Activated B cell treated with CpG ODN at 0.5 μM for 24 hours (primary cell): ENCODE measurements at regions of chr12 and their contacts with region 1.

Region 1: GRCh38 chr12:6554168-6555017 is 1.4 kb downstream of the IFFO1 start:
- DNase-seq: peak; percentile 61
- ATAC-seq: peak; percentile 77
- H3K4me3 Mint-ChIP-seq: peak overlapping the region; percentile 84
- H3K27ac Mint-ChIP-seq: peak overlapping the region; percentile 70
- H3K4me1 Mint-ChIP-seq: peaks cover 45% of the 10 kb centered on the region
- H3K27me3 Mint-ChIP-seq: no peaks in the 10 kb centered on the region
- CTCF ChIP-seq: peak; percentile 43

Region 2: DNA sequence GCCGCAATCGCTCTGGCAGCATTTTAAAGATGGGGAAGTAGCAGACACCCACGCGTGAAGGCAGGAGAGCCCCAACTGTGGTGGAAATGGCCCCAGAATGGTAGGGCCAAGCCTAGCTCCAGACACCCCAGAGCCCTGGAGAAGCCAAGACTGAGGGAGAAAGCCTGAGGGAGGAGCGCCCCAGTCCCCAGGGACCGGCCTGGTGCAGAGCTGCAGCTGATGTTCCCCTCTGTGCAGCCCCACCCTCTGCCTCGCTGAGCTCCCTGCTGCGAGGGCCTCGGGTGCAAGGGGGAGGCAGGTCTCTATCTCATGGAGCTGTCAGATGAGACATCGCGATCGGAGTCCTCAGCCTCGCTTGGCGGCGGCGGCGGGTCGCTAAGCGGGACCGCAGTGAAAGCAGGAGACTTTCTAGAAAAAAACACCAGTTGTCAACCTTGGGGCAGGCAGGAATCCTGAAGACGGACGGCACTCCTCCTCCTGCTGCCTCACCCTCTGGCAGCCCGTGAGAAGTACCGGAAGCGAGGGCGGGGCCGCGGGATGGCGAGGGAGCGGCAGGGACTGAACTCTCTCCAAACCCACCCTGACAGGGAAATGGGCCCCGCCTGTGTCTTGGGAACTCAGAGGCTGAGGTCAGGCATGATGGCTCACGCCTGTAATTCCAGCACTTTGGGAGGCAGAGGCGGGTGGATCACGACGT is 14.1 kb before region 1 on chr12:
- CTCF ChIA-PET with region 1: interaction called, 24 read pairs
- POLR2A ChIA-PET with region 1: interaction called, 10 read pairs
- intact Hi-C with region 1: loop called (anchors 1 kb)
- DNase-seq: no peak
- ATAC-seq: peak; percentile 45
- H3K4me3 Mint-ChIP-seq: peak overlapping the region; percentile 77
- H3K27ac Mint-ChIP-seq: peak overlapping the region; percentile 74
- H3K4me1 Mint-ChIP-seq: peaks cover 46% of the 10 kb centered on the region
- H3K27me3 Mint-ChIP-seq: no peaks in the 10 kb centered on the region
- CTCF ChIP-seq: no peak

Region 3: GRCh38 chr12:6570264-6570887 is 16.0 kb after region 1 on chr12:
- CTCF ChIA-PET with region 1: interaction called, 6 read pairs
- POLR2A ChIA-PET with region 1: interaction called, 7 read pairs
- intact Hi-C with region 1: loop called (anchors 2 kb)
- DNase-seq: peak; percentile 37
- ATAC-seq: no peak
- H3K4me3 Mint-ChIP-seq: no peak overlapping the region
- H3K27ac Mint-ChIP-seq: peak overlapping the region; percentile 41
- H3K4me1 Mint-ChIP-seq: peaks cover 28% of the 10 kb centered on the region
- H3K27me3 Mint-ChIP-seq: no peaks in the 10 kb centered on the region
- CTCF ChIP-seq: no peak

Region 4: DNA sequence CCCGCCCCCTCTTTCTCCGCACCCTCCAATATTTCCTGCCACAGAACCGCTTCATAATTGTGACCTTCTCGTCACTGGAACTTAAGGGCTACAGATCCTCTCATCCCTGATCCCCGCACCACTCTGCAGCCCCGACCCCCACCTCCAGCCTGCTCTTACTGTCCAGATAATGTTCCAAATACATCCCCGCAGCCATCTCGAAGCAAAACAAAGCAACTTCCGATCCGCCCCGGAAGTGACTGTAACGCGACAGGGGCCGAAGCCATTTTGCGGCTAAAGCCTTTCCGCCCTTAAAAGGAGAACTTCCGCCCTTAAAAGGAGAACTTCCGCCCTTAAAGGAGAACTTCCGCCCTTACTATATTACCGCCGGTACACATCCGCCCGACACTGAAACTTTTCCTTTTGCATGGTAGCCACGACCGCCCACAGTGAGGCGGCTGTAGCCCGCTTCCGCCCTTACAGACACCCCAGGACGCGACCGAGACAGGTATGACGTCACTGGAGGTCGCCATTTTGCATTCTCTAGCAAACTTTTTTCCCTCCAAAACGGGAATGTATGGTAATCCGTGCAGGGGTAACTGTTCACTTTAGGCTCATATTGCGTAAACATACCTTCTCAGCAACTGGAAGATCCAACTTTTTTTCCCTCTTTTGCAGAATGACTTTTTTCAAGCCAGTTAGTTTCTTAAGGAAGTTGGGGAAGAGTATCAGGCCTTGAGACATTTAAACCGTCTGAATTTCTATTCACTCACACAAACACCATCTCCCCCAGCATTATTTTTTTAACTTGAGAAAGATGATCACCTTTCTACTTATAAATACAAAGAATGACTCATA is 108.7 kb after region 1 on chr12 and contains the start of gene ING4:
- CTCF ChIA-PET with region 1: no interaction called
- POLR2A ChIA-PET with region 1: no interaction called
- intact Hi-C with region 1: loop called (anchors 1 kb)
- DNase-seq: peak; percentile 80
- ATAC-seq: peak; percentile 97
- H3K4me3 Mint-ChIP-seq: peak within 1 kb of the TSS; percentile 97
- H3K27ac Mint-ChIP-seq: peak within 1 kb of the TSS; percentile 95
- H3K4me1 Mint-ChIP-seq: peaks cover 27% of the 10 kb centered on the region
- H3K27me3 Mint-ChIP-seq: no peaks in the 10 kb centered on the region
- CTCF ChIP-seq: no peak
- total RNA-seq, gene ING4: 31.6 and 39.2 TPM in 2 replicates

Region 5: GRCh38 chr12:6697584-6698351 is 143.4 kb after region 1 on chr12:
- CTCF ChIA-PET with region 1: interaction called, 4 read pairs
- POLR2A ChIA-PET with region 1: no interaction called
- intact Hi-C with region 1: loop called (anchors 1 kb)
- DNase-seq: no peak
- ATAC-seq: no peak
- H3K4me3 Mint-ChIP-seq: peak overlapping the region; percentile 42
- H3K27ac Mint-ChIP-seq: peak overlapping the region; percentile 74
- H3K4me1 Mint-ChIP-seq: peaks cover 60% of the 10 kb centered on the region
- H3K27me3 Mint-ChIP-seq: peaks cover 18% of the 10 kb centered on the region
- CTCF ChIP-seq: no peak

Region 6: DNA sequence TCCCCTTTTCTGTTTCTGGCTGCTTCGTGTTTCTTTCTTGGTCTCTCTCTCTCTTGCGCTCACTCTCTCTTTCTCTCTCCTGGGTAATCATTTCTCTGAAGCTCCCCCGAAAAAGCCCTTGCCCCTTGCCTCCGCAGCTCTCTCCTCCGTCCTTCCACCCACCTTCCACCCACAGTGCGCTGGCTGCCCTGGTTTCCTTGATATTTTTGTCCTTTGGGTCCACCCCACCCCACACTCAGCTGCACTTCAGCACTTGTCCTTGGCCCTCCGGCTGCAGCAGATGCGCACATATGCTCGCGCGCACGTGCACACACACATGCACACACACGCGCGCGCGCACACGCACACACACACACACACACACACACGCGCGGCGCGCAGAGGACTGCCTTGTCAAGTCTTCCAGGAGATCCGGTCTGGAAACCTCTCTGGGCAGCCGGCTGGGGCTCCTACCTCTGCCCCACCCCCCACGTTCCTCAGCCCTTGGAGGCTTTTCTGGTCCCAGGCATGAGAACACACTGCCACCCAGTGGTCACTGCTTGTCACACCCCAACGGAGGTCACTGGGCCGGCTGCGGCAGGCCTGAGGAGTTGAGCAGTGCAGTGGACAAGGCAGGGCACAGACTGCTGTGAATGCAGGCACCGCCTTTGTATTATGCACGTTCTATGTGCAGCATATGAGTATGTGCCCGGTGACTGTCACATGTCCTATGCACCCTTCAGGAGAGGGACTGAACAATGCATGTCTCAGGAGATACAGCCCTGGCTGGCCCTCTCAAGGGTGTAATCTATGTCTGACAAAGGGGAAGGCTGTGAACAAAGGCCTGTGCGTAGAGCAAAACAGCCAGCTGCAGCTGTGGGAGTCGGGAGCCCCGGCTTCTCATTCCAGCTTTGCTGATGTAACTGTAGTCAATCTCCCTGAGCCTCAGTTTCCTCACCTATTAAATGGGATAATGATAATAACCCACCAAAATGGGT is 224.5 kb after region 1 on chr12:
- CTCF ChIA-PET with region 1: interaction called, 7 read pairs
- POLR2A ChIA-PET with region 1: no interaction called
- intact Hi-C with region 1: loop called (anchors 1 kb)
- DNase-seq: peak; percentile 77
- ATAC-seq: peak; percentile 98
- H3K4me3 Mint-ChIP-seq: peak overlapping the region; percentile 74
- H3K27ac Mint-ChIP-seq: peak overlapping the region; percentile 4
- H3K4me1 Mint-ChIP-seq: peaks cover 9% of the 10 kb centered on the region
- H3K27me3 Mint-ChIP-seq: peaks cover 42% of the 10 kb centered on the region
- CTCF ChIP-seq: peak; percentile 68

Region 7: DNA sequence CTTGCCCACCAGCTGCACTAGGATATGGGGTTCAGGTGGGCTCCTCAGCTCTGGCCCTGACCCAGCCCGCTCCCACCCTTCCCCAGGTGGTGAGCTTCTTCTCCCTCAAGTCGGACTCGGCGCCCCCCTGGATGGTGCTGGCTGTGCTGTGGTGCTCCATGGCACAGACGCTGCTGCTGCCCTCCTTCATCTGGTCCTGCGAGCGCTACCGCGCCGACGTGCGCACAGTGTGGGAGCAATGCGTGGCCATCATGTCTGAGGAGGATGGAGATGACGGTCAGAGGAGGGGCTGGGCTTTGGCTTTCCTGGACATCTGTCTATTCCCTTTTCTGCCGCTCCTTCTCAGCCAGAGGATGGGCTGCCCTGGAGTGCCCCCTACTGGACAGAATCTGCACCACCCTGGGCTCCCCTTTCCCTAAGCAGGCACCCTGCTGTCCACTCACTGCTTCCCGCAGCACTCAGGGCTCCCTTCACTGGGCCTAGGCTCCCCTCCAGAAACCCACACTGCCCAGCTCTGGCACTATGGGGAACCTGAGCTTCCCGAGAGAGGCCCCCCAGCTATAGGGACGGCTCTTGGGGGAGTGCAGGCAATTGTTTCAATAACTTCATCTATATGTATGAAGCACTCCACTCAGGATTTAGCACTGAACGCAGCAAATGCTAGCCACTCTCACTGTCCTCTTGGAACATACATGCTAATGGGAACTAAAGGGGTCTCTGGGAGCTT is 271.2 kb after region 1 on chr12:
- CTCF ChIA-PET with region 1: no interaction called
- POLR2A ChIA-PET with region 1: no interaction called
- intact Hi-C with region 1: loop called (anchors 2 kb)
- DNase-seq: peak; percentile 69
- ATAC-seq: peak; percentile 62
- H3K4me3 Mint-ChIP-seq: no peak overlapping the region
- H3K27ac Mint-ChIP-seq: no peak overlapping the region
- H3K4me1 Mint-ChIP-seq: peaks cover 32% of the 10 kb centered on the region
- H3K27me3 Mint-ChIP-seq: peaks cover 73% of the 10 kb centered on the region
- CTCF ChIP-seq: peak; percentile 47